Esophagus muscularis mucosa (tissue), 4 donors: ENCODE measurements at regions of chr18 and their contacts with region 1.

Region 1: DNA sequence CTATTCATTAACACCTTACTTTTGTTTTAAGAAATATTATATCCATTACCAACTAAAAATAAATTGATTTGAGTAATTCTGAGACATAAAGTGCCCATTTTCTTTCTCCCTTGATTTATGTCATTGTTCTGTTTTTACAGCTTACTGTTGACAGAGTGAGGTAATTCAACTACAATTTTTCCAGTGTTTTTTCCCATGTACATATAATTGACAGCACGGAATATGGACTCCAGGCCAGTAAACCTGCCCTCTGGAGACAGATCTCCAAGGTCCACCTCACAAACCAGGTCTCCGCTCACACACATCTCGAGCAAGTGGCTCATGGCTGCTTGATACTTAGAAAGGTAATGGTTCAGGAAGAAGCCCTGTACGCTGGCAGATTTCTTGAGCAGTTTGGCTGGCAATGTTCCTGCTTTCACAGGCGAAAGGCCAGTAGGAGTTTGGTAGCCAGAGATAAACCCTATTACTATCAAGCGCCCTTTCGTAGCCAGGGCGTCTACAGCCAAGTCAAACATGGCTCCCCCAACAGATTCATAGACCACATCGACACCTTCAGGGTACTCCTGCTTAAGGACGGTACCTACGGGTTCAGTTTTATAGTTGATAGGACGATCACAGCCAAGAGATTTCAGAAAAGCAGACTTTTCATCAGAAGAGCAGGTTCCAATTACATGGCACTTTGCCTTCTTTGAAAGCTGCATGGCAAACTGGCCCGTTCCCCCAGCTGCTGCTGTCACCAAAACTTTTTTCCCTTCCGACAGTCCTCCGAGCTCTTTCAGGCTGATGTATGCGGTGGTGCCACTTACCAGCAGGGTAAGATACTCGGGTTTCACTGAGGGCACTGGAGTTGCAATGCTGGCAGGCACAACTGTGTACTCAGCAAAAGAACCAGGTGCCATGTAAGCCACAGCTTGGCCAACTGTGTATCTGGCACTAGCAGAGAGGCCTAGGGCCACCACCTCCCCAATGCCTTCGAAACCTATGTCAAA is 7.4 kb downstream of the PTGR3 start:
- DNase-seq: no peak
- H3K4me3 ChIP-seq: no peak overlapping the region
- H3K27ac ChIP-seq: peak overlapping the region; percentile 97 to 100 (median 98)
- H3K4me1 ChIP-seq: peaks cover 50 to 91% (median 86%) of the 10 kb centered on the region in 4 donors
- H3K27me3 ChIP-seq: no peaks in the 10 kb centered on the region
- CTCF ChIP-seq: no peak
- EP300 ChIP-seq: no peak
- POLR2A ChIP-seq: no peak

Region 2: GRCh38 chr18:74784752-74785151 is 416.8 kb before region 1 on chr18:
- intact Hi-C with region 1: no loop called
- DNase-seq: no peak
- H3K4me3 ChIP-seq: no peak overlapping the region
- H3K27ac ChIP-seq: no peak overlapping the region
- H3K4me1 ChIP-seq: no peaks in the 10 kb centered on the region
- H3K27me3 ChIP-seq: no peaks in the 10 kb centered on the region
- CTCF ChIP-seq: no peak
- EP300 ChIP-seq: no peak
- POLR2A ChIP-seq: no peak

Region 3: GRCh38 chr18:75029481-75029880 is 172.1 kb before region 1 on chr18:
- intact Hi-C with region 1: no loop called
- DNase-seq: no peak
- H3K4me3 ChIP-seq: no peak overlapping the region
- H3K27ac ChIP-seq: no peak overlapping the region
- H3K4me1 ChIP-seq: peaks cover 0 to 15% (median 4%) of the 10 kb centered on the region in 4 donors
- H3K27me3 ChIP-seq: no peaks in the 10 kb centered on the region
- CTCF ChIP-seq: no peak
- EP300 ChIP-seq: no peak
- POLR2A ChIP-seq: no peak

Region 4: GRCh38 chr18:75173738-75174137 is 27.8 kb before region 1 on chr18:
- intact Hi-C with region 1: loop called (anchors 2 kb)
- DNase-seq: no peak
- H3K4me3 ChIP-seq: no peak overlapping the region
- H3K27ac ChIP-seq: no peak overlapping the region
- H3K4me1 ChIP-seq: peaks cover under 1 to 9% (median 7%) of the 10 kb centered on the region in 4 donors
- H3K27me3 ChIP-seq: no peaks in the 10 kb centered on the region
- CTCF ChIP-seq: no peak
- EP300 ChIP-seq: no peak
- POLR2A ChIP-seq: no peak

Region 5: DNA sequence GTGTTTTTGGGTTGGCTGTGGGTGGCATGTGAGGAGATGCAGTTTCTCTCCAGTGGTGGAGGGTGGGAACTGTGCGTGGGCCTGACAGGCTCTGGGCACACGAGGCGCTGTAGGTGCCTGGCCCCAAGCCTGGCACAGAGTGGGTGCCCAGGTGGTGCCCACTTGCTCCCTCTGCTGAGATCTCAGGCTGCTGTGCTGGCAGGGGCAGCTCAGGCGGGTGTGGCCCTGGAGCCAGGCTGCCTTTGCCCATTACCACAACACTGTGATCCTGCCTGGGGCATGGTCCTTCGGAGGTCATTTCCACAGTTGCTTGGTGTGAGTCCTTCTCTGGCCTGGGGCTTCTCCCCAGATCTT is 29.5 kb after region 1 on chr18:
- intact Hi-C with region 1: no loop called
- DNase-seq: no peak
- H3K4me3 ChIP-seq: no peak overlapping the region
- H3K27ac ChIP-seq: peak overlapping the region in 3 of 4 donors; percentile 29 to 59 (median 36)
- H3K4me1 ChIP-seq: peaks cover 35 to 71% (median 51%) of the 10 kb centered on the region in 4 donors
- H3K27me3 ChIP-seq: no peaks in the 10 kb centered on the region
- CTCF ChIP-seq: no peak
- EP300 ChIP-seq: no peak
- POLR2A ChIP-seq: no peak